ENCODE measurements at regions of chr18 and their contacts with region 1.

Region 1: DNA sequence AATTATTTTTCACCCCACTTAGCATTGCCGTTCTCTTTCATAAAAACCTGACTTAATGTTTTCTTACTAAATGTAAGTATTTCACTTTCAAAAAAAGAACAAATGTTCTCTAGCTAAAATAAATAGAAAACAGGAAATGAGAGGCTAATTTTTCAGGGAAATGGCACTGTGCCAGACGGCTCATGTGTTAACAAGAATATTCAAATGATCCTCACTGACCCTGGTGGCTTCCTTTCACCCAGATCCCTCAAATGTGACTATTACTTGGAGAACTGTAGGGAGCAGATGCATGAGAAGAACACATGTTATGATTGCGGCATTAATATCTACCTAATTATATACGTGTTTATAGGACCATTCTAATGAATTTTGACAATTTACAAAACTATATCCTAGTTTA is 827.7 kb downstream of the SOCS6 start:
- DNase-seq: peak in 1 of 2 donors; percentile 14
- ATAC-seq: no peak
- H3K4me3 ChIP-seq: no peak overlapping the region
- H3K27ac ChIP-seq: no peak overlapping the region
- H3K4me1 ChIP-seq: no peaks in the 10 kb centered on the region
- H3K27me3 ChIP-seq: no peaks in the 10 kb centered on the region
- CTCF ChIP-seq: no peak

Region 2: DNA sequence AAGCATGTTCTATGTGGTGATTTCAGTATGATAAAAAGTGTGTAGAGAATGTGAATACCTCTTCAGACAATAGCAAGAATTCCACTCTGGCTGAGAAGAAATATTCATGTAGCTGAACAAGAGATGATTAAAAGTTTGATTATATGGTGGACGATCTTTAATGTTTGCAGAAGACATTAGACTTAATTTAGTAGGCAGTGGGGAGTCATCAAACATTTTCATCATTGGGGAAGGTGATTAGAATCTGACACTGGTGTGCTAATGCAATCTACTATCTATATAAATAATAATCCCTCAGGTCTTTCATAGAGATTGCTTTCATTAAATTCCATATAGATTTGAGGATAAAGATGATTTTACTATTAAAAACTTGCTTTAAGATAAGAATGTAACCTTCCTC is 66.6 kb before region 1 on chr18:
- intact Hi-C with region 1: loop called in 1 of 10 experiments (anchors 10 kb)
- DNase-seq: no peak
- ATAC-seq: no peak
- H3K4me3 ChIP-seq: no peak overlapping the region
- H3K27ac ChIP-seq: no peak overlapping the region
- H3K4me1 ChIP-seq: no peaks in the 10 kb centered on the region
- H3K27me3 ChIP-seq: no peaks in the 10 kb centered on the region
- CTCF ChIP-seq: no peak

Region 3: GRCh38 chr18:71194438-71194837 is 77.9 kb after region 1 on chr18:
- intact Hi-C with region 1: no loop called
- DNase-seq: no peak
- ATAC-seq: no peak
- H3K4me3 ChIP-seq: no peak overlapping the region
- H3K27ac ChIP-seq: no peak overlapping the region
- H3K4me1 ChIP-seq: no peaks in the 10 kb centered on the region
- H3K27me3 ChIP-seq: no peaks in the 10 kb centered on the region
- CTCF ChIP-seq: no peak

Region 4: GRCh38 chr18:72375618-72376017 is 1259.1 kb after region 1 on chr18:
- intact Hi-C with region 1: no loop called
- DNase-seq: no peak
- ATAC-seq: peak in 2 of 8 donors; percentile 33
- H3K4me3 ChIP-seq: no peak overlapping the region
- H3K27ac ChIP-seq: no peak overlapping the region
- H3K4me1 ChIP-seq: no peaks in the 10 kb centered on the region
- H3K27me3 ChIP-seq: no peaks in the 10 kb centered on the region
- CTCF ChIP-seq: no peak

Measured in heart right ventricle (tissue), 16 donors.